ENCODE measurements at regions of chr10 and their contacts with region 1.

Region 1: DNA sequence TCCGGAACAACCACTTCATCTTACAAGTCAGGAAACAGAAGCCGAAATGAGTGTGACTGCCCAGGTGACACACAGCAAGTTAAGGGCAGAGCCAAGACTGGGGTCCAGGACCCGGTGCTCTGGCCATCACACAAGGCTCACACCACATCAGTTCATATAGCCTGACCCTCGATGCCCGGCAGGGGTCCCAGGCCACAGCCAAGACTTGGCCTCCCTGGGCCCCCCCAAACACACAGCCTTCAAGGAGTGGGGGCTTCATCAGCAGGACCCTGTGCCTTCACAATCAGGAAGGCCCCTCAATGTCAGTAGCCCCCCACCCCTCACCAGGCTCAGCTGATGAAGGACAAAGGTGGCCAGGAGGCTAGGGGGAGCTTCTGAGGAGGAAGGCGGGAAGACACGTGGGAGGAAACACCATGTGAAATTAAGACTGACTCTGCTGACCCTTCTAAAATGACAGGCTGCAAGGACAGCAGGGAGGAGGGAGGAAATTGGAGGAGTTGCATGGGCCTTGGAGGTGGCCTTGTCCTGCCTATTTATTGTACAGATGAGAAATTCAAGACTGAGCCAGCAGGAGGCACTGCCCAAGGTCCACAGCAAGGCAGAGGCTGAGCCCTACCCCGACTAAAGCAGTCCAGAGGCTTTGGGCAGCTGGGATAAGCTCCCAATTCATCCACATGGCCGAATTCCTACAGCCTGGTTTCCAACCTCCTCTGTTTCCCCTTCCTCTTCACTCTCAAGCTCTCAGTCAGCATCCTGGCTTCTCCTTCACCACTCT is 216.1 kb upstream of the ZMIZ1 start:
- DNase-seq: no peak
- ATAC-seq: no peak
- H3K4me3 ChIP-seq: no peak overlapping the region
- H3K27ac ChIP-seq: no peak overlapping the region
- H3K4me1 ChIP-seq: peaks cover 2 to 18% (median 7%) of the 10 kb centered on the region in 9 donors
- H3K27me3 ChIP-seq: no peaks in the 10 kb centered on the region
- CTCF ChIP-seq: peak in 7 of 9 donors; percentile 25 to 49 (median 41)

Region 2: GRCh38 chr10:78798976-78799730 is 53.5 kb before region 1 on chr10:
- intact Hi-C with region 1: no loop called
- DNase-seq: no peak
- ATAC-seq: no peak
- H3K4me3 ChIP-seq: no peak overlapping the region
- H3K27ac ChIP-seq: no peak overlapping the region
- H3K4me1 ChIP-seq: peaks cover 11 to 29% (median 19%) of the 10 kb centered on the region in 9 donors
- H3K27me3 ChIP-seq: no peaks in the 10 kb centered on the region
- CTCF ChIP-seq: no peak

Region 3: DNA sequence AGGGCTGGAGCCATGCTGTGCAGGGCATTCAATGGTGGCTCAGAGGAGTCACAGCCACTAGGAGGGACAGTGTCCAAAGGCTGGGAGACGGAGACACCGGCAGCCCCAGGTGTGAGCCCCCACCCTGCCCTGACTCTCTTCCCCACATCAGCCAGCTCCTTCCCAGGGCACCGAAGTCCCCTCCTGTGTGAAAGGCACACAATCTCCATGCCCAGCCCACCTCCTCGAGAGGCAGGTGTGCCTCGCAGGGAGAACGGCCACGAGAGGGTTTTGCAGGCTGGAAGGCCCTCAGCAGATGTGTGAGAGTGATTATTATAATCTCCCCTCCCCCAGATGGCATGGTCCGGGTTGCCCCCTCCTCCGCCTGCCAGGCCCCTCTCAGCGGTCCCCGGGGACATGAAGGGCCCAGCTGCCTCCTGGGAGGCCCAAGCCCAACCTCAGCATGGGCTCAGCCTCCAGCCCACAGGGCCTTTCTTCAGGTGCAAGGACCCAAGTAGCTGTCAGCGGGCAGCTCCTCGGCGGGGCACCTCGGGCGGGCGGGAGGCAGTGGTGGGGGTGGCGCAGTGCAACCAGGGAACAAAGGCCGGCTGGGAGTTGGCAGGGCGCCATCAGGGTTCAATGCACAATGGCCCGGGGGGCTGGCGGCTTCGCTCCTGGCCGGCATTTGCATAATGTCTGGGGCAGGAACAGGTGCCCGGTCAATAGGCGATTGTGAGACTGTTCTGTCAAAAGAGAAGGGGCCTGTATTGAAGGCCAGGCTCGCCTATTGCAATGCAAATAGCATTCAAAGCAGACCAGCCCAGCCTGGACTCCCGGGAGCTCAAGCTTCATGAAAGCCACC is 60.8 kb after region 1 on chr10:
- intact Hi-C with region 1: loop called in 1 of 10 experiments (anchors 10 kb)
- DNase-seq: no peak
- ATAC-seq: peak in 1 of 8 donors; percentile 37
- H3K4me3 ChIP-seq: no peak overlapping the region
- H3K27ac ChIP-seq: no peak overlapping the region
- H3K4me1 ChIP-seq: peaks cover 0 to 8% (median 0%) of the 10 kb centered on the region in 9 donors
- H3K27me3 ChIP-seq: no peaks in the 10 kb centered on the region
- CTCF ChIP-seq: no peak

Region 4: DNA sequence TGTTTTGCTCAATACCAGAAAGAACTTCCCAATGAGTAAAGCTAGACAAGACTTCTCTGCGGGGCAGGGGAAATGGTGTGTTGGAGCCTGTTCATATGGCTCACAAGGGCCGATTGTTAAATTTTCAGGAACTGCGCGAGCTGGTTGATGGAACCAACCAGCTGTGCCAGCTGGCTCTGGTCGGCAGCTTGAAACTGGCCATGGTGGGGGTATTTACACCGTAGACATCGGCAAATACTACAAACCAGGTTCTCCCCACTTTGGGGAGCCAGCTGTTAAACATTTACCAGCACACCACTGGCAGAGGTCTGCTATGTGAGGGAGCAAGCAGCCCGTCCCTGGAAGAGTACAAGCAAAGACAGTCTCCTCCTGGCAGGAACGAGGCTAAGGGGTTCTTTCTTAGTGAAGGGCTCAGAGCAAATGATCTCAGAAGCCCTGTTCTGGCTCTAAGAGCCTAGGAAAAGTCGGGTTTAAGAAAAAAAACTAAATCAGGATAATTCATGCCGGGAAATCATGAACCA is 207.3 kb after region 1 on chr10:
- intact Hi-C with region 1: loop called in 3 of 10 experiments (anchors 5 to 10 kb)
- DNase-seq: no peak
- ATAC-seq: no peak
- H3K4me3 ChIP-seq: no peak overlapping the region
- H3K27ac ChIP-seq: no peak overlapping the region
- H3K4me1 ChIP-seq: peaks cover 0 to 14% (median 5%) of the 10 kb centered on the region in 9 donors
- H3K27me3 ChIP-seq: no peaks in the 10 kb centered on the region
- CTCF ChIP-seq: no peak

Region 5: GRCh38 chr10:79178614-79179163 is 326.0 kb after region 1 on chr10:
- intact Hi-C with region 1: no loop called
- DNase-seq: peak in 1 of 2 donors; percentile 69
- ATAC-seq: peak; percentile 20 to 56 (median 35)
- H3K4me3 ChIP-seq: no peak overlapping the region
- H3K27ac ChIP-seq: peak overlapping the region in 9 of 10 donors; percentile 22 to 91 (median 70)
- H3K4me1 ChIP-seq: peaks cover 78 to 100% (median 97%) of the 10 kb centered on the region in 9 donors
- H3K27me3 ChIP-seq: no peaks in the 10 kb centered on the region
- CTCF ChIP-seq: no peak

Measured in heart right ventricle (tissue), 16 donors.